Caco-2 (cell line): ENCODE measurements at regions of chr19 and their contacts with region 1.

Region 1: GRCh38 chr19:16111160-16111908 is at the start of gene RAB8A:
- DNase-seq: peak; percentile 98
- H3K4me3 ChIP-seq: peak within 1 kb of the TSS; percentile 72
- H3K4me3 Mint-ChIP-seq: peak within 1 kb of the TSS; percentile 96
- H3K27ac Mint-ChIP-seq: peak within 1 kb of the TSS; percentile 95
- H3K4me1 ChIP-seq: peaks cover 26% of the 10 kb centered on the region
- H3K4me1 Mint-ChIP-seq: peaks cover 20% of the 10 kb centered on the region
- H3K27me3 ChIP-seq: no peaks in the 10 kb centered on the region
- H3K27me3 Mint-ChIP-seq: no peaks in the 10 kb centered on the region
- CTCF ChIP-seq: peak; percentile 69 to 81
- total RNA-seq, gene RAB8A: 108 and 129 TPM in 2 replicates

Region 2: DNA sequence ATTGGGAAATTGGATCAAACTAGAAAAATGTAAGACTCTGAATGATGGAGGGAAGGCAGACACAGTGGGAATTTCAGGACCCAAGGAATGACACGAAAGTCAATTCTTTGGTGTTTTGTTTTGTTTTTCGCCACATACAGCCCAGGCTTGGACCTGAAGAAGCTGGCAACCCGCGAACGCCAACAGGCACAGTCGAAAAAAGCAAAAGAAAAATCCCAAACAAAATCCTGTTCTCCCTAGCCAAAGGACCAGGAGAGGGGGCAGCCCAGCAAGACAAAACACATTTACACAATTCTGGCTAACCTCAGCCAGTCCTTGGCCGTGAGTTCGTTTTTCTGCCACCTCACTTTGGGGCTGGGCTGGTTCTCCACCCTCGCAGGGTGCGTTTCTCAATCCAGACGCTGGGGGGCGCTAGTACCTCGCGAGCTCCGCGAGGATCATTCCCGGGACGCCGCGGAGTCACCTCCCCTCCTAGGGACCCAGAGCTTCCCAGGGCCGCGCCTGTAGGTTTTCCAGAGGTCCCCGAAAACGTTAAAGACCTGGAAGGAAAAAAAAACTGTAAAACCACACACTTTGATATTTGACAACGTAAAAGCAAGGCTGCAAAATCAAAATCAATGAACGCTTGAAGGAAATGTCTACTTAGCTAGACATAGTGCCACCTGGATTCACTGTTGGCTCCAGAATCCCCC is 69.9 kb before region 1 on chr19:
- CTCF ChIA-PET with region 1: interaction called, 12 read pairs
- POLR2A ChIA-PET with region 1: no interaction called
- intact Hi-C with region 1: loop called (anchors 1 kb)
- DNase-seq: peak; percentile 71 to 89
- H3K4me3 ChIP-seq: no peak overlapping the region; the same call in 1 of the 2 replicates
- H3K4me3 Mint-ChIP-seq: peak overlapping the region; percentile 50
- H3K27ac Mint-ChIP-seq: no peak overlapping the region
- H3K4me1 ChIP-seq: no peaks in the 10 kb centered on the region; the same call in 1 of the 2 replicates
- H3K4me1 Mint-ChIP-seq: no peaks in the 10 kb centered on the region
- H3K27me3 ChIP-seq: no peaks in the 10 kb centered on the region
- H3K27me3 Mint-ChIP-seq: no peaks in the 10 kb centered on the region
- CTCF ChIP-seq: peak; percentile 88 to 96

Region 3: DNA sequence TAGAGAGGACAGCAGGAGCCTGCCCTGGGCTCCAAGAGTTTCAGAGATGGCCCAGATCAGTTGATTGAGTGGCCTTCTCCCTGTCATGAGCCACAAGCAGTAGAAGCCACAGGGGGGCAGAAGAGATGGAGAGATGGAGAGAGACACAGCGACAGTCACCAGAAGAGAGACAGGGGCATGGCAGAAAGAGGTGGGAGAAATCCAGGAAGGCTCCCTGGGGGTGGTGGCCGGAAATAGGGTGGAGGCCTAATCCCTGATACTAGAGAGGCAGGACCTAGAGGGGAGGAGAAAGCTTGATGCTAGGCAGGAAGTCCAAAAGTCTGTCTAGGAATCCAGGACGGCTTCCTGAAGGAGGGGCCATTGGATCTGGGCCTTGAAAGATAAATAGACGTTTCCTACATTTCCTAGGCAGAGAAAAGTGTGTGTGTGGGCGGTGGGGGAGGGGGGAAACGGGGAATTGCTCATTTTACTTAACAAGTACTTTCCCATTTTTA is 44.7 kb before region 1 on chr19:
- CTCF ChIA-PET with region 1: interaction called, 3 read pairs
- POLR2A ChIA-PET with region 1: no interaction called
- intact Hi-C with region 1: loop called (anchors 1 kb)
- DNase-seq: peak; percentile 70 to 75
- H3K4me3 ChIP-seq: no peak overlapping the region
- H3K4me3 Mint-ChIP-seq: no peak overlapping the region
- H3K27ac Mint-ChIP-seq: peak overlapping the region; percentile 65
- H3K4me1 ChIP-seq: 0 out of 2 replicates have a peak, but pooled peaks cover 4% of the 10 kb centered on the region
- H3K4me1 Mint-ChIP-seq: peaks cover 7% of the 10 kb centered on the region
- H3K27me3 ChIP-seq: no peaks in the 10 kb centered on the region
- H3K27me3 Mint-ChIP-seq: no peaks in the 10 kb centered on the region
- CTCF ChIP-seq: peak in 1 of 2 experiments; percentile 44

Region 4: GRCh38 chr19:16076154-16076957 is 35.0 kb before region 1 on chr19 and contains the start of gene TPM4:
- CTCF ChIA-PET with region 1: interaction called, 6 read pairs
- POLR2A ChIA-PET with region 1: interaction called, 6 read pairs
- intact Hi-C with region 1: loop called (anchors 2 kb)
- DNase-seq: peak; percentile 89 to 91
- H3K4me3 ChIP-seq: peak within 1 kb of the TSS; percentile 86
- H3K4me3 Mint-ChIP-seq: peak within 1 kb of the TSS; percentile 82
- H3K27ac Mint-ChIP-seq: peak within 1 kb of the TSS; percentile 90
- H3K4me1 ChIP-seq: peaks cover 21% of the 10 kb centered on the region
- H3K4me1 Mint-ChIP-seq: peaks cover 18% of the 10 kb centered on the region
- H3K27me3 ChIP-seq: no peaks in the 10 kb centered on the region
- H3K27me3 Mint-ChIP-seq: no peaks in the 10 kb centered on the region
- CTCF ChIP-seq: no peak
- total RNA-seq, gene TPM4: 368 and 392 TPM in 2 replicates

Region 5: GRCh38 chr19:16088351-16089009 is 22.9 kb before region 1 on chr19:
- CTCF ChIA-PET with region 1: interaction called, 12 read pairs
- POLR2A ChIA-PET with region 1: interaction called, 5 read pairs
- intact Hi-C with region 1: loop called (anchors 1 kb)
- DNase-seq: no peak
- H3K4me3 ChIP-seq: no peak overlapping the region
- H3K4me3 Mint-ChIP-seq: peak overlapping the region; percentile 43
- H3K27ac Mint-ChIP-seq: peak overlapping the region; percentile 91
- H3K4me1 ChIP-seq: peaks cover 52% of the 10 kb centered on the region
- H3K4me1 Mint-ChIP-seq: peaks cover 28% of the 10 kb centered on the region
- H3K27me3 ChIP-seq: no peaks in the 10 kb centered on the region
- H3K27me3 Mint-ChIP-seq: no peaks in the 10 kb centered on the region
- CTCF ChIP-seq: peak; percentile 31 to 35

Region 6: DNA sequence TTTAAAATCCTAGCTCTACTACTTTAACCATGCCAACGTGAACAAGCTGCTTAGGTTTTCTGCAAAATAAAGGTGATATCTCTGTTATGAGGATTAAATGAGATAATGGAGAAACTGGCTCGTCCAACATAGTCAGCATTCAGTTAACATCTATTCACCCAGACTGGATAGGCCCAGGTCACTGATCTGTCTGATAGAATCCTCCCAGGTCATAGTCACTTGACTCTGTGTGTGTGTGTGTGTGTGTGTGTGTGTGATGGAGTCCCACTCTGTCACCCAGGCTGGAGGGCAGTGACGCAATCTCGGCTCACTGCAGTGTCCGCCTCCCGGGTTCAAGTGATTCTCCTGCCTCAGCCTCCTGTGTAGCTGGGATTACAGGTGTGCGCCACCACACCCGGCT is 12.5 kb before region 1 on chr19:
- CTCF ChIA-PET with region 1: interaction called, 4 read pairs
- POLR2A ChIA-PET with region 1: interaction called, 6 read pairs
- intact Hi-C with region 1: loop called (anchors 1 kb)
- DNase-seq: no peak
- H3K4me3 ChIP-seq: no peak overlapping the region
- H3K4me3 Mint-ChIP-seq: peak overlapping the region; percentile 59
- H3K27ac Mint-ChIP-seq: peak overlapping the region; percentile 91
- H3K4me1 ChIP-seq: peaks cover 83% of the 10 kb centered on the region
- H3K4me1 Mint-ChIP-seq: peaks cover 41% of the 10 kb centered on the region
- H3K27me3 ChIP-seq: no peaks in the 10 kb centered on the region
- H3K27me3 Mint-ChIP-seq: no peaks in the 10 kb centered on the region
- CTCF ChIP-seq: no peak